ENCODE measurements at regions of chr17 and their contacts with region 1.

Region 1: DNA sequence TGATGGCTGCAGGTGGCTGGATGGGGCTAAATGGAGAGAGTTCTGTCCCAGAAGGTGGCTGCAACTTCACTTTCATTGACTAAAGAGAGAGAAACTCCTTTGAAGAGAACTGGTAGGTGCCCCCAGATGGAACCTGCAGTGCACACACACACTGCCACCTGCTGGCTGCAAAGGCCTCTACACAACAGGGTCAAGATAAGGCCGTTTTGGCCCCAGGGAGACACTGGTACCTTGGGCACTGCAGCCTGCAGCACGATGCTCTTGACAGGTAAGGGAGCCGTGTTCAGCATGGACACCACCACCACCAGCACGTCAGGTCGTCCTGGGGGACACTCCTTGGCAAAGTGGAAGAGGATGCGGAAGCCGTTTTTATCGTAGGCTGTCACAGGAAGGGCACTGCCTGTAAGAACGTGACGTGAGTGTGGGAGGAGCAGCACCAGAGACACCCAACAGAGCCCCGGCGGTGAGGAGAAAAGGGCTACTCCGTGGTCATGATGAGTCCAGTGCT is 22.7 kb downstream of the GGA3 start:
- DNase-seq: peak; percentile 60
- ATAC-seq: peak; percentile 68
- H3K4me3 Mint-ChIP-seq: no peak overlapping the region
- H3K27ac Mint-ChIP-seq: peak overlapping the region; percentile 99
- H3K4me1 Mint-ChIP-seq: peaks cover 6% of the 10 kb centered on the region
- H3K27me3 Mint-ChIP-seq: no peaks in the 10 kb centered on the region
- CTCF ChIP-seq: peak; percentile 66

Region 2: GRCh38 chr17:74972107-74972972 is 266.4 kb before region 1 on chr17 and contains the start of gene HID1:
- CTCF ChIA-PET with region 1: no interaction called
- POLR2A ChIA-PET with region 1: no interaction called
- DNase-seq: peak; percentile 89
- ATAC-seq: peak; percentile 83
- H3K4me3 Mint-ChIP-seq: peak within 1 kb of the TSS; percentile 90
- H3K27ac Mint-ChIP-seq: no peak within 1 kb of the TSS
- H3K4me1 Mint-ChIP-seq: peaks cover 12% of the 10 kb centered on the region
- H3K27me3 Mint-ChIP-seq: peaks cover 55% of the 10 kb centered on the region
- CTCF ChIP-seq: no peak
- total RNA-seq, gene HID1: 16.7 to 19.4 TPM (median 19.3 TPM) in 3 replicates

Region 3: GRCh38 chr17:75012346-75013091 is 226.2 kb before region 1 on chr17 and contains the start of gene MRPL58:
- CTCF ChIA-PET with region 1: interaction called, 11 read pairs
- POLR2A ChIA-PET with region 1: no interaction called
- DNase-seq: peak; percentile 94
- ATAC-seq: peak; percentile 81
- H3K4me3 Mint-ChIP-seq: peak within 1 kb of the TSS; percentile 73
- H3K27ac Mint-ChIP-seq: peak within 1 kb of the TSS; percentile 99
- H3K4me1 Mint-ChIP-seq: peaks cover 26% of the 10 kb centered on the region
- H3K27me3 Mint-ChIP-seq: no peaks in the 10 kb centered on the region
- CTCF ChIP-seq: no peak
- total RNA-seq, gene MRPL58: 41.8 to 43.7 TPM (median 41.9 TPM) in 3 replicates

Region 4: GRCh38 chr17:75205037-75205792 is 33.5 kb before region 1 on chr17 and contains the start of gene NUP85:
- CTCF ChIA-PET with region 1: interaction called, 39 read pairs
- POLR2A ChIA-PET with region 1: interaction called, 4 read pairs
- DNase-seq: peak; percentile 95
- ATAC-seq: peak; percentile 89
- H3K4me3 Mint-ChIP-seq: peak within 1 kb of the TSS; percentile 92
- H3K27ac Mint-ChIP-seq: peak within 1 kb of the TSS; percentile 100
- H3K4me1 Mint-ChIP-seq: peaks cover 14% of the 10 kb centered on the region
- H3K27me3 Mint-ChIP-seq: no peaks in the 10 kb centered on the region
- CTCF ChIP-seq: no peak
- total RNA-seq, gene NUP85: 89.7 to 109 TPM (median 95.1 TPM) in 3 replicates

Region 5: GRCh38 chr17:75250009-75250471 is 11.3 kb after region 1 on chr17:
- CTCF ChIA-PET with region 1: interaction called, 56 read pairs
- POLR2A ChIA-PET with region 1: interaction called, 7 read pairs
- DNase-seq: no peak
- ATAC-seq: no peak
- H3K4me3 Mint-ChIP-seq: no peak overlapping the region
- H3K27ac Mint-ChIP-seq: peak overlapping the region; percentile 78
- H3K4me1 Mint-ChIP-seq: peaks cover 48% of the 10 kb centered on the region
- H3K27me3 Mint-ChIP-seq: no peaks in the 10 kb centered on the region
- CTCF ChIP-seq: no peak

Region 6: DNA sequence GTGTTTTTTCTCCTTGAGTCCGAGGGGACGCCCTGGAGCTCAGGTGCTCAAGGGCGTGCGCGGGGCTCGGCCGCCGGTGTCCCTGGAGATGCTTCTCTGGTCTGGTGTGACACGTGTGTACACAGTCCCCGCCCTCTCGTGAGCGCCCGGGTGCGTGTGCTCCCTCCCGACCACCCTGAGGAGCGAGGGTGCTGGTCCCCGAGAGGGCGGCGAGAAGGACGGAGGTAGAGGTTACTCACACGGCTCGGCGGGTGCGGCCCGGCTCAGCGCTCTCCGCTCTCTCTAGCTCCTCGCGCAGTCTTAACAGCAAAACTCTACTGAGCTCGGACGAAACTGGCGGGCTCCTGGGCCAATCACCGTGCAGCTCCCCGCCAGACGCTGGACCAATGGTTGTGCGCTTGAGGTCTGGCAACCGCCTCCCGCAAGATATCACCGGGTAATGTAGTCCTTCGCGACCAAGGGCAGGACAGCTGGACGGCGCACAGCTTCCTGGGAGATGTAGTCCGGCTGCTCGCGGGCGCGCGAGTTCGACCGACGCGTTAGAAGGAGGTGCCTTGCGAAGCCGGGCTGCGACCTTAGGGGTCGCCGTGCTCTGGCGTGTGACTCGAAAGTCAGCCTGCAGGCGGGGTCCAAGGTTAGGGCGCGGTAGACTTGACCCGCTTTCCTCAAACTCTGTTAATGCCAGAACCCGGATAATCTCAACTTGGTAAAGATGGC is 50.5 kb after region 1 on chr17 and contains the start of gene SLC25A19:
- CTCF ChIA-PET with region 1: interaction called, 37 read pairs
- POLR2A ChIA-PET with region 1: interaction called, 6 read pairs
- DNase-seq: peak; percentile 98
- ATAC-seq: peak; percentile 98
- H3K4me3 Mint-ChIP-seq: peak within 1 kb of the TSS; percentile 94
- H3K27ac Mint-ChIP-seq: peak within 1 kb of the TSS; percentile 99
- H3K4me1 Mint-ChIP-seq: peaks cover 8% of the 10 kb centered on the region
- H3K27me3 Mint-ChIP-seq: no peaks in the 10 kb centered on the region; the same call in 1 of the 2 replicates
- CTCF ChIP-seq: no peak
- total RNA-seq, gene SLC25A19: 22.6 to 27.7 TPM (median 23.0 TPM) in 3 replicates

Region 7: DNA sequence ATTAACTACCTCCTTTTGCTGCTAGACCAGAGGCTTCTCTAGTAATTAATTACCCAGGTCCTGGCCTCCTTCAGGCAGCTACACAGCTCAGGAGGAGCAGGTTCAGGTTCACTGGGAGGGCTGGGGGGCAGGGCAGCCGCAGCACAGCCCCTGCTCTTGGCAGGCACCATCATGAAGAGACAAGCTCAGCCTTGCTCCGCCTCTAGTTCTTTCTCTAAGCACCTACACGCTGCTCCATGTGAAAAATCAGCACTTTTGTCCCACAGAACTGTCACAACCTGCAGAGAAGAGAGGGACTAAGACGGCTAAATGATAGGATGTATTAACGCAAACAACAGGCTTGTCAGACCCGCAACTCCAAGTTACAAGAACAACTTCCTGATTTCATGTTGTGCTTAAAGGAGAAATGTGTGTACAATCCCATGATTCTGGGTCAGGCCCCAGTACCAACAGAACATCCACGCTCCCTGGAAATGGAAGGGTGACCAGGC is 113.4 kb after region 1 on chr17:
- CTCF ChIA-PET with region 1: no interaction called
- POLR2A ChIA-PET with region 1: no interaction called
- DNase-seq: peak; percentile 66
- ATAC-seq: peak; percentile 94
- H3K4me3 Mint-ChIP-seq: peak overlapping the region; percentile 10; the same call in 1 of the 2 replicates
- H3K27ac Mint-ChIP-seq: peak overlapping the region; percentile 97
- H3K4me1 Mint-ChIP-seq: peaks cover 53% of the 10 kb centered on the region
- H3K27me3 Mint-ChIP-seq: no peaks in the 10 kb centered on the region
- CTCF ChIP-seq: no peak

Region 8: GRCh38 chr17:75412455-75413317 is 173.9 kb after region 1 on chr17:
- CTCF ChIA-PET with region 1: interaction called, 56 read pairs
- POLR2A ChIA-PET with region 1: no interaction called
- DNase-seq: peak; percentile 78
- ATAC-seq: peak; percentile 93
- H3K4me3 Mint-ChIP-seq: 0 out of 2 replicates have a peak overlapping the region, but pooled peaks have one; percentile 10
- H3K27ac Mint-ChIP-seq: peak overlapping the region; percentile 29; the same call in 1 of the 2 replicates
- H3K4me1 Mint-ChIP-seq: peaks cover 7% of the 10 kb centered on the region
- H3K27me3 Mint-ChIP-seq: peaks cover 9% of the 10 kb centered on the region
- CTCF ChIP-seq: peak; percentile 65